ENCODE measurements at regions of chr10 and their contacts with region 1.

Region 1: GRCh38 chr10:113692267-113692666 is 12.6 kb downstream of the CASP7 start:
- DNase-seq: no peak
- H3K4me3 ChIP-seq: no peak overlapping the region
- H3K4me3 Mint-ChIP-seq: no peak overlapping the region
- H3K27ac ChIP-seq: no peak overlapping the region
- H3K27ac Mint-ChIP-seq: no peak overlapping the region
- H3K4me1 ChIP-seq: no peaks in the 10 kb centered on the region
- H3K4me1 Mint-ChIP-seq: peaks cover 35 to 53% (median 46%) of the 10 kb centered on the region in 3 donors
- H3K27me3 ChIP-seq: no peaks in the 10 kb centered on the region
- H3K27me3 Mint-ChIP-seq: no peaks in the 10 kb centered on the region

Region 2: GRCh38 chr10:113550365-113550764 is 141.9 kb before region 1 on chr10:
- CTCF ChIA-PET with region 1: no interaction called
- POLR2A ChIA-PET with region 1: no interaction called
- DNase-seq: no peak
- H3K4me3 ChIP-seq: no peak overlapping the region
- H3K4me3 Mint-ChIP-seq: no peak overlapping the region
- H3K27ac ChIP-seq: no peak overlapping the region
- H3K27ac Mint-ChIP-seq: no peak overlapping the region
- H3K4me1 ChIP-seq: no peaks in the 10 kb centered on the region
- H3K4me1 Mint-ChIP-seq: no peaks in the 10 kb centered on the region
- H3K27me3 ChIP-seq: no peaks in the 10 kb centered on the region
- H3K27me3 Mint-ChIP-seq: peaks cover 6 to 25% of the 10 kb centered on the region in 2 donors

Region 3: GRCh38 chr10:113678690-113679462 is 13.4 kb before region 1 on chr10:
- CTCF ChIA-PET with region 1: interaction called, 11 read pairs
- POLR2A ChIA-PET with region 1: no interaction called
- DNase-seq: peak; percentile 45 to 76 (median 59)
- H3K4me3 ChIP-seq: peak overlapping the region; percentile 97
- H3K4me3 Mint-ChIP-seq: peak overlapping the region; percentile 95 to 98 (median 97)
- H3K27ac ChIP-seq: peak overlapping the region; percentile 86
- H3K27ac Mint-ChIP-seq: peak overlapping the region; percentile 51 to 98 (median 85)
- H3K4me1 ChIP-seq: peaks cover 24% of the 10 kb centered on the region
- H3K4me1 Mint-ChIP-seq: peaks cover 41 to 46% (median 46%) of the 10 kb centered on the region in 3 donors
- H3K27me3 ChIP-seq: no peaks in the 10 kb centered on the region
- H3K27me3 Mint-ChIP-seq: peaks cover 0 to 2% of the 10 kb centered on the region in 2 donors

Region 4: DNA sequence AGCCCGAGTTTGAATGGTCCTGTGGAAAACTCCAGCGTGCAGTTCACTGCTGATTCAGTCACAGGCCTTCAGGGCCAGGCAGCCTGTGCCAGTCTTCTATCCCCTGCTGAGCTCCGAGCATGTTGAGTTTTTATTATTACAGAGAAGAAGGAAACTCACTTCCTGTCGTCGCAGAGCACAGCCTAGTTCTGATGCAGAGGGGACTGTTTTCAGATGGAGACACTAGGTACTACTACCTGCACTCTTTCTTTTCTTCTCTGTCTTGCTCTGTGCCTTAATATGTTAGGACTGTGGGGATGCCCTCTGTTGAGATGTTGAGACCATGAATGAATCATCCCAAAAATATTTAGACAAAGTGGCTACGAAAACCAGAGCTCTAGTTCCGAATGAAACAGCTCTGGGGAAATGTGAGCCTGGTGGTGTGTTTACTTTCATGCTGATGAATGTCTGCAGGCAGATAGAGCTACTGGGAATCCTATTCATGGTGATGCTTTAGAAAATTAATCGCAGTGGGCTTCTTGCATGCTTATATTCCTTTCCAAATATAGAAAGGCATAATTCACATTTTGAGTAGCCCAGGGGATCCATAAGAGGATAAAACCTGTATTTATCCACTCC is 17.1 kb after region 1 on chr10:
- CTCF ChIA-PET with region 1: no interaction called
- POLR2A ChIA-PET with region 1: no interaction called
- DNase-seq: no peak
- H3K4me3 ChIP-seq: no peak overlapping the region
- H3K4me3 Mint-ChIP-seq: no peak overlapping the region
- H3K27ac ChIP-seq: no peak overlapping the region
- H3K27ac Mint-ChIP-seq: peak overlapping the region in 2 of 8 donors; percentile 26 to 62
- H3K4me1 ChIP-seq: no peaks in the 10 kb centered on the region
- H3K4me1 Mint-ChIP-seq: peaks cover 39 to 58% (median 51%) of the 10 kb centered on the region in 3 donors
- H3K27me3 ChIP-seq: no peaks in the 10 kb centered on the region
- H3K27me3 Mint-ChIP-seq: no peaks in the 10 kb centered on the region

Measured in CD8-positive, alpha-beta memory T cell (primary cell).